ENCODE measurements at regions of chr15 and their contacts with region 1.

Region 1: GRCh38 chr15:70528270-70528706 is 235.1 kb downstream of the UACA start:
- DNase-seq: peak in 8 of 9 donors; percentile 62 to 81 (median 77)
- ATAC-seq: peak; percentile 92
- H3K4me3 ChIP-seq: peak overlapping the region; percentile 55
- H3K4me3 Mint-ChIP-seq: peak overlapping the region; percentile 78 to 86 (median 82)
- H3K27ac ChIP-seq: peak overlapping the region; percentile 65
- H3K27ac Mint-ChIP-seq: peak overlapping the region; percentile 87 to 99 (median 95)
- H3K4me1 ChIP-seq: peaks cover 36 to 64% of the 10 kb centered on the region in 2 donors
- H3K4me1 Mint-ChIP-seq: peaks cover 42 to 99% (median 89%) of the 10 kb centered on the region in 7 donors
- H3K27me3 ChIP-seq: no peaks in the 10 kb centered on the region
- H3K27me3 Mint-ChIP-seq: peaks cover 0 to 4% (median 0%) of the 10 kb centered on the region in 5 donors

Region 2: DNA sequence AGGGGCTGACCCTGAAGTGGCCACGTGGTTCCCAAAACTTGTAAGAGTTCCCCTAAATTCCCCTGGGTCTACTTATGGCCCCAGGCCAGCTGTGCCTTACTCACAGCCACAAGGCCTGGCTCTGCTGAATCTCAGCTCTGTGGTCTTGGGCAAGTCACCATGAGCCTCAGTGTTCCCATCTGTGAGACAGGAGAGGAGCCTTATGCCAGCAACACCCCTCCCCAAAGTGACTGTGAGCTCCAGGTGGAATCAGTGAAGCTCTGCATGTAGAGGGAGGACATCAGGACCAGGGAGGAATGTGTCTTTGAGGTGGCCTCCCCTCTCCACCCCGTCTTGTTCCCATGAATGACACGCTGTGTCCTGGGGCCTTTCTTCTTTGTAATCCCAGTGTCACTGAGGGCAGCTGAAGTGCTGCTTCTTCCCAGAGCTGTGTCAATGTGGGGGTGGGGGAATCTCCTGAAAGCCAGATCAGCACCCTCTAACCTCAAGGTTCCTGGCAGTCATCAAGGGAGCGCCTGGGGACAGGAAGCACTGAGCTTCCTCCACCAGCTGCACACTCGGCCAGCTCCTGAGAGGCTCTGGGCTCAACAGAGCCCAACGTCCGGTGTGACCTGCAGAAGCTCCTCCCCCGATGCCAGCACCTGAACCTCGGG is 23.9 kb before region 1 on chr15:
- CTCF ChIA-PET with region 1: interaction called, 5 read pairs
- POLR2A ChIA-PET with region 1: interaction called, 17 read pairs
- intact Hi-C with region 1: no loop called
- DNase-seq: peak in 1 of 9 donors; percentile 62
- ATAC-seq: peak; percentile 39
- H3K4me3 ChIP-seq: no peak overlapping the region
- H3K4me3 Mint-ChIP-seq: peak overlapping the region in 9 of 10 donors; percentile 34 to 77 (median 69)
- H3K27ac ChIP-seq: no peak overlapping the region
- H3K27ac Mint-ChIP-seq: peak overlapping the region in 7 of 9 donors; percentile 22 to 79 (median 59)
- H3K4me1 ChIP-seq: peaks cover 33 to 39% of the 10 kb centered on the region in 2 donors
- H3K4me1 Mint-ChIP-seq: peaks cover 45 to 88% (median 70%) of the 10 kb centered on the region in 7 donors
- H3K27me3 ChIP-seq: no peaks in the 10 kb centered on the region
- H3K27me3 Mint-ChIP-seq: peaks cover 0 to 10% (median 0%) of the 10 kb centered on the region in 5 donors